ENCODE measurements at regions of chr1 and their contacts with region 1.

Region 1: DNA sequence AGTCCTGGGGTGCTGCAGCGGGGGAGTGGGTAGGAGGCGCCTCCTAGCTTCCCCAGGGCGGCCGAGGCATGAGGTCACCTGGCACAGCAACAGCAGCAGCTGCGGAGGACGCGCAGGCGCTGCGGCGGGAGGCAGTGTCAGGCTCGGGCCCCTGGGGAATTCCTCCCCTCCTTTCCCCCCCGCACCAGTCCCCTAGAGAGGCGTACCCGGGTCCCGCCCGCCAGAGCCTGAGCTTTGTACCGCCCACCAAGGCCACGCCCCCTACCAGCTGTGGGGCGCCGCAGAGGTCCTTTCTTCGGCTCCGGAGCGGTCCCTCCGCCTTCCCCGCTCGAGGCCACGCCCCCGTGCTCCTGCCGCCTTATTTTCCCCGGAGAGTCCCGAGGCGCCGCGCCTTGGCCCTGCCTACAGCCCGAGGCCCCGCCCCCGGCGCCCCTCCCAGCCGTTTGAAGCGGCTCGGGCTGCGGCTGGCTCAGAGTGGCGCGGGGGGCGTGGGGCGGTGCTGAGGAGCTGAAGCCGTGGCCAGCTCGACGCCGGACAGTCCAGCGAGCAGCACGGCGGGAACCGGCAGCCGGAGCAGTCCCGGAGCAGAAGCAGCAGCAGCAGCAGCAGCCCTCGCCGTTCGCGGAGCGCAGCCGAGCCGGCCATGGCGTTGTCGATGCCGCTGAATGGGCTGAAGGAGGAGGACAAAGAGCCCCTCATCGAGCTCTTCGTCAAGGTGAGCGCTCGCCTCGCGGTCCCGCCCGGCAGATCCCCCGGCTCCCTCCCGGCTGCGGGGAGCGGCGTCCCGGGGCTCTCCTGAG is at the start of gene CLIC4:
- DNase-seq: peak; percentile 100
- H3K4me3 ChIP-seq: peak within 1 kb of the TSS; percentile 75 to 96 (median 79)
- H3K27ac ChIP-seq: peak within 1 kb of the TSS; percentile 85
- H3K4me1 ChIP-seq: peaks cover 32% of the 10 kb centered on the region
- H3K27me3 ChIP-seq: no peaks in the 10 kb centered on the region
- CTCF ChIP-seq: no peak
- POLR2A ChIP-seq: peak; percentile 98
- total RNA-seq, gene CLIC4: 330 and 333 TPM in 2 replicates

Region 2: GRCh38 chr1:24642481-24643361 is 102.4 kb before region 1 on chr1 and contains the start of gene SRRM1:
- CTCF ChIA-PET with region 1: no interaction called
- POLR2A ChIA-PET with region 1: no interaction called
- dilution Hi-C with region 1: no loop called
- intact Hi-C with region 1: loop called (anchors 5 kb)
- DNase-seq: peak; percentile 100
- H3K4me3 ChIP-seq: peak within 1 kb of the TSS; percentile 81 to 100 (median 81)
- H3K27ac ChIP-seq: peak within 1 kb of the TSS; percentile 84
- H3K4me1 ChIP-seq: peaks cover 18% of the 10 kb centered on the region
- H3K27me3 ChIP-seq: peaks cover 0 to under 1% of the 10 kb centered on the region in 2 experiments
- CTCF ChIP-seq: no peak
- POLR2A ChIP-seq: peak; percentile 98
- total RNA-seq, gene SRRM1: 157 and 163 TPM in 2 replicates

Region 3: GRCh38 chr1:24705260-24706073 is 39.6 kb before region 1 on chr1:
- CTCF ChIA-PET with region 1: interaction called, 4 read pairs
- POLR2A ChIA-PET with region 1: interaction called, 22 read pairs
- dilution Hi-C with region 1: no loop called
- intact Hi-C with region 1: loop called (anchors 1 kb)
- DNase-seq: peak; percentile 97
- H3K4me3 ChIP-seq: peak overlapping the region in 1 of 3 experiments; percentile 12
- H3K27ac ChIP-seq: peak overlapping the region; percentile 76
- H3K4me1 ChIP-seq: peaks cover 19% of the 10 kb centered on the region
- H3K27me3 ChIP-seq: no peaks in the 10 kb centered on the region
- CTCF ChIP-seq: no peak
- POLR2A ChIP-seq: peak; percentile 62

Region 4: DNA sequence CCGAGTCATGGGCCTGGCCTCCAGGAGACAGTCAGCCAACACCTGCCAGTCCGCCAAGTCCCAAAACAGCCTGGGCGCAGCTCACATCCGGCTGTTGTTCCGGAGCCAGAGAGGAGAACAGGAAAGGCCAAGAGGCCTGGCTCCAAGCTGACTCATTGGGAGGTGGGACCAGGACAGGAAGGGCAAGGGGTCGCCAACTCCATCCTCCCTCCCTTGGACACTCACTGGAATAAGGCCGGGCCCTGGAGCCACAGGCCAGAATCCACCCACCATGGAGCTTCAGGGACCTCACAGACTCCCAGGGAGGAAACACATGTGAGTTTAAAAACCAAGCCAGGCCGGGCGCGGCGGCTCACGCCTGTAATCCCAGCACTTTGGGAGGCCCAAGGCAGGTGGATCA is 25.0 kb before region 1 on chr1:
- CTCF ChIA-PET with region 1: interaction called, 19 read pairs
- POLR2A ChIA-PET with region 1: interaction called, 42 read pairs
- dilution Hi-C with region 1: no loop called
- intact Hi-C with region 1: loop called (anchors 1 kb)
- DNase-seq: peak; percentile 96
- H3K4me3 ChIP-seq: no peak overlapping the region
- H3K27ac ChIP-seq: peak overlapping the region; percentile 85
- H3K4me1 ChIP-seq: peaks cover 27% of the 10 kb centered on the region
- H3K27me3 ChIP-seq: no peaks in the 10 kb centered on the region
- CTCF ChIP-seq: no peak
- POLR2A ChIP-seq: peak; percentile 65

Region 5: GRCh38 chr1:24727501-24728216 is 17.5 kb before region 1 on chr1:
- CTCF ChIA-PET with region 1: interaction called, 24 read pairs
- POLR2A ChIA-PET with region 1: interaction called, 42 read pairs
- dilution Hi-C with region 1: no loop called
- intact Hi-C with region 1: loop called (anchors 1 kb)
- DNase-seq: no peak
- H3K4me3 ChIP-seq: no peak overlapping the region
- H3K27ac ChIP-seq: no peak overlapping the region
- H3K4me1 ChIP-seq: peaks cover 45% of the 10 kb centered on the region
- H3K27me3 ChIP-seq: no peaks in the 10 kb centered on the region
- CTCF ChIP-seq: no peak
- POLR2A ChIP-seq: no peak

Region 6: DNA sequence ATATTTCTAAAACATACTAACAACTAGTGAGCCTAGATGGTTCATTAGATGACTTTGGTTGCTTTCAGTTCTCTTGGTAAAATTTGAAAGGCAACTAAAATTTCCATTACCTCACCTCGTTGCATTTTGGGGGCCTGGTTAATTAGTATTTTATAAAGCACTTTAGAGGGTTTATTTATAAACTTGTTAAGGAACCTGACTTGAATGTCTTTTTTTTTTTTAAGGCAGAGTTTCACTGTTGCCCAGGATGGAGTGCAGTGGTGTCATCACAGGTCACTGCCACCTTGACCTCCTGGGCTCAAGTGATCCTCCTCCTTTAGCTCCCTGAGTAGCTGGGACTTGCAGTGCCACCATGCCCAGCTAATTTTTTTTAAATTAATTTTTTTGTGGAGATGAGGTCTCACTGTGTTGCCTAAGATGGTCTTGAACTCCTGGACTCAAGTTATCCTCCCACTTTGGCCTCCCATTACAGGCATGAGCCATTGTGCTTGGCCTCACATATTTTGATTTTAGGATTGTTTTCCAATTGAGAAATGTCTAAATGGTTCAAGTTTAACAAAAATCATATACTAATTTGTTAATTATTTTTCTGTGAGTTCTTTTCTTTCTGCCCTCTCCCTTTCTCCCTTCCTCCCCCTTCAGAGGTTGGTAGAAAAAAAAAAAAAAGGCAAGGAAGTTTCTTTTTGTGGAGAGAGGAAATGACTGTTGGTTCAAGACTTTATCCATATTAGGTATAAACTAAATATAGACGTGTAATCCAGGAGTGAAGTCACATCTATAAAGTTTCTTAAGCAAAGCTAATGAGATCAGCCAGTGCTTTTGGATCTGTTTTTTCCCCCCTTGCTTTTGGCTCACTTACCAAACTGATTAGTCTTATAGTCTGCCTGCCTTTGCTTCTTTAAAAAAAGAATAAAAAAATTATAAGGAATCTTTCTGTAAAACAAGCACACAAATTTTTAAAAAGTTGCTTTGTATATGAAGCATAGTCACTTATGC is 24.8 kb after region 1 on chr1:
- CTCF ChIA-PET with region 1: interaction called, 8 read pairs
- POLR2A ChIA-PET with region 1: interaction called, 17 read pairs
- dilution Hi-C with region 1: no loop called
- intact Hi-C with region 1: loop called (anchors 1 kb)
- DNase-seq: peak; percentile 92
- H3K4me3 ChIP-seq: no peak overlapping the region
- H3K27ac ChIP-seq: peak overlapping the region; percentile 96
- H3K4me1 ChIP-seq: peaks cover 54% of the 10 kb centered on the region
- H3K27me3 ChIP-seq: no peaks in the 10 kb centered on the region
- CTCF ChIP-seq: no peak
- POLR2A ChIP-seq: peak; percentile 52

Region 7: GRCh38 chr1:24805534-24806301 is 60.6 kb after region 1 on chr1:
- CTCF ChIA-PET with region 1: interaction called, 18 read pairs
- POLR2A ChIA-PET with region 1: interaction called, 27 read pairs
- dilution Hi-C with region 1: no loop called
- intact Hi-C with region 1: loop called (anchors 1 kb)
- DNase-seq: peak; percentile 95
- H3K4me3 ChIP-seq: peak overlapping the region in 1 of 3 experiments; percentile 52
- H3K27ac ChIP-seq: peak overlapping the region; percentile 86
- H3K4me1 ChIP-seq: peaks cover 61% of the 10 kb centered on the region
- H3K27me3 ChIP-seq: no peaks in the 10 kb centered on the region
- CTCF ChIP-seq: no peak
- POLR2A ChIP-seq: peak; percentile 34

Region 8: GRCh38 chr1:25161981-25162380 is 416.9 kb after region 1 on chr1:
- CTCF ChIA-PET with region 1: no interaction called
- POLR2A ChIA-PET with region 1: no interaction called
- dilution Hi-C with region 1: no loop called
- intact Hi-C with region 1: no loop called
- DNase-seq: no peak
- H3K4me3 ChIP-seq: no peak overlapping the region
- H3K27ac ChIP-seq: no peak overlapping the region
- H3K4me1 ChIP-seq: no peaks in the 10 kb centered on the region
- H3K27me3 ChIP-seq: peaks cover 3 to 11% of the 10 kb centered on the region in 2 experiments
- CTCF ChIP-seq: no peak
- POLR2A ChIP-seq: no peak